Ascending aorta (tissue), 2 donors: ENCODE measurements at regions of chr17 and their contacts with region 1.

Region 1: GRCh38 chr17:7435221-7435675 is at the start of gene TMEM102:
- DNase-seq: peak; percentile 92 to 98
- H3K4me3 ChIP-seq: peak within 1 kb of the TSS; percentile 59 to 69
- H3K27ac ChIP-seq: peak within 1 kb of the TSS; percentile 45 to 52
- H3K4me1 ChIP-seq: peaks cover 14 to 30% of the 10 kb centered on the region in 2 donors
- H3K27me3 ChIP-seq: peaks cover 14% of the 10 kb centered on the region
- CTCF ChIP-seq: no peak
- total RNA-seq, gene TMEM102: 20.4 TPM

Region 2: GRCh38 chr17:7403977-7404736 is 31.1 kb before region 1 on chr17 and contains the start of gene TMEM256:
- intact Hi-C with region 1: loop called (anchors 1 kb)
- DNase-seq: peak; percentile 97 to 100
- H3K4me3 ChIP-seq: peak within 1 kb of the TSS; percentile 69 to 85
- H3K27ac ChIP-seq: peak within 1 kb of the TSS; percentile 89 to 92
- H3K4me1 ChIP-seq: peaks cover 0 to 22% of the 10 kb centered on the region in 2 donors
- H3K27me3 ChIP-seq: no peaks in the 10 kb centered on the region
- CTCF ChIP-seq: peak in 2 of 3 experiments; percentile 5 to 25
- total RNA-seq, gene TMEM256: 241 TPM

Region 3: GRCh38 chr17:7454980-7455379 is 19.7 kb after region 1 on chr17:
- intact Hi-C with region 1: loop called (anchors 2 kb)
- DNase-seq: no peak
- H3K4me3 ChIP-seq: peak overlapping the region; percentile 73 to 80
- H3K27ac ChIP-seq: peak overlapping the region in 1 of 2 donors; percentile 74
- H3K4me1 ChIP-seq: peaks cover 0 to 5% of the 10 kb centered on the region in 2 donors
- H3K27me3 ChIP-seq: no peaks in the 10 kb centered on the region
- CTCF ChIP-seq: no peak